ENCODE measurements at regions of chrX and their contacts with region 1.

Region 1: GRCh38 chrX:151789179-151789800 is 54.7 kb downstream of the CNGA2 start:
- DNase-seq: peak in 1 of 4 experiments; percentile 13
- ATAC-seq: 0 out of 3 replicates have a peak, but pooled peaks have one; percentile 34
- H3K4me3 ChIP-seq: no peak overlapping the region
- H3K27ac ChIP-seq: no peak overlapping the region
- H3K4me1 ChIP-seq: no peaks in the 10 kb centered on the region
- H3K27me3 ChIP-seq: peaks cover 0 to 11% of the 10 kb centered on the region in 2 experiments; a peak in 1 of 5 replicates
- CTCF ChIP-seq: no peak
- EP300 ChIP-seq: no peak
- POLR2A ChIP-seq: no peak
- RAD21 ChIP-seq: no peak

Region 2: GRCh38 chrX:151896734-151897474 is 107.6 kb after region 1 on chrX:
- CTCF ChIA-PET with region 1: no interaction called
- POLR2A ChIA-PET with region 1: no interaction called
- in situ Hi-C with region 1: no loop called
- intact Hi-C with region 1: no loop called
- DNase-seq: peak in 1 of 4 experiments; percentile 20
- ATAC-seq: peak; percentile 91
- H3K4me3 ChIP-seq: no peak overlapping the region
- H3K27ac ChIP-seq: 0 out of 3 replicates have a peak overlapping the region, but pooled peaks have one; percentile 20
- H3K4me1 ChIP-seq: peaks cover 0 to 10% of the 10 kb centered on the region in 2 experiments; a peak in 2 of 5 replicates
- H3K27me3 ChIP-seq: no peaks in the 10 kb centered on the region
- CTCF ChIP-seq: no peak
- EP300 ChIP-seq: peak; percentile 83
- POLR2A ChIP-seq: no peak
- RAD21 ChIP-seq: peak; percentile 16 to 20; a peak in 2 of 4 replicates

Region 3: DNA sequence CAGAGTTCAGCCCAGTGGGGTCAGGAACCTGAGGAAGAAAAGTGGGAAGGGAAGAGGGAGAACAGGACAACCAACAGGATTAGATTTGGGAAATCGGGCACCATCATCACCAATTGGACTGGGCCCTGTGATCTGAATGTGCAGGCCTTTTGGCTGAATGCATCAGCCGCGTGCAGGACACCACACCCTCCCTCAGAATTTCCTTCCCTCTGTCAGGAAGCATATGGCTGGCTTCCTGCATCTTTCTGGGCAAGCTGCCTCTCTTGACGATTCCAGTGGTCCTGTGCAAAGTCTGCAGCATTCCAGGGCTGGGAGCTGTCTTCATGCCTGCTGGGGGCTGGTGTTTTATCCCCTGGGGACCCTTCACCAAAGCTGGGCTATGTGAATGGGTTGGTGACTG is 139.8 kb after region 1 on chrX:
- CTCF ChIA-PET with region 1: no interaction called
- POLR2A ChIA-PET with region 1: no interaction called
- in situ Hi-C with region 1: loop called (anchors 10 kb)
- intact Hi-C with region 1: no loop called
- DNase-seq: no peak
- ATAC-seq: no peak
- H3K4me3 ChIP-seq: no peak overlapping the region
- H3K27ac ChIP-seq: no peak overlapping the region
- H3K4me1 ChIP-seq: no peaks in the 10 kb centered on the region
- H3K27me3 ChIP-seq: peaks cover 0 to 21% of the 10 kb centered on the region in 2 experiments; a peak in 3 of 5 replicates
- CTCF ChIP-seq: no peak
- EP300 ChIP-seq: no peak
- POLR2A ChIP-seq: no peak
- RAD21 ChIP-seq: no peak

Region 4: DNA sequence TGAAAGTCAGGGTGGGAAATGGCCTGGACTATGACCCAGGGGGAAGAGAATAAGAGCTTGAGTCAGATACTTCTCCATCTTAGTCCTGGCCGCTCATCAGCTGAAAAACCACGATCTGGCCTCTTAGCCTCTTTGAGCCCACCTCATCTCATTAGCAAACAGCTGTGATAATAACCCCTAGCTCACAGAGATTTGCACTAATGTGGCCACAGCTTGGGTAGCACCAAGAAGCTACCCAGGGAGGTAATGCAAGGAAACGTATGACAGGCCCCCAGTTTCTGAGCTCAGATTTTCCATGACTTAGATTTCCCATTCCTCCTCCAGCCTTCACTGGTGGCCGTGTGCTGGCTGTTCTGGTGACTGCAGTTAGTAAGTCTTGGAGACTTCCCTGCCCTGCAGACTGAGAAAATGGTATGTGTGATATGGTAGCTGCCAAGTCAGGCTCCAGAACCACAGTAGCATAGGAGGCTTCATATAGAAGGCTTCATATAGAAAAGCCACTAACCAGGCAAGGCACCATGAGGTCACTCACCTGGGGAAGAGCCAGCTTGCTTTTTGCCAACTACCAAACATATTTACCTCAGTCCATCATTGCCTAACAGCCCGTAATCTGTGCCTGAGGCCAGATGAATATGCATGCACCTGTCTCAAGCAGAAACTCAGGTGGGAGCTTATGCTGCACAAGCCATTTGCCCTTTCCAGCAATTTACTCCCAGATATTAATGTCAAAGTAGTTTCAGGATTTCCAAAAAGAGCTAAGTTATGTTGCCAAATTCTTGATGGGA is 236.6 kb after region 1 on chrX:
- CTCF ChIA-PET with region 1: no interaction called
- POLR2A ChIA-PET with region 1: no interaction called
- in situ Hi-C with region 1: no loop called
- intact Hi-C with region 1: no loop called
- DNase-seq: no peak
- ATAC-seq: no peak
- H3K4me3 ChIP-seq: no peak overlapping the region
- H3K27ac ChIP-seq: no peak overlapping the region
- H3K4me1 ChIP-seq: peaks cover 3 to 18% of the 10 kb centered on the region in 2 experiments; a peak in 3 of 5 replicates
- H3K27me3 ChIP-seq: no peaks in the 10 kb centered on the region
- CTCF ChIP-seq: no peak
- EP300 ChIP-seq: no peak
- POLR2A ChIP-seq: no peak
- RAD21 ChIP-seq: no peak